CD14-positive monocyte (primary cell): ENCODE measurements at regions of chr17 and their contacts with region 1.

Region 1: GRCh38 chr17:57927048-57927723 is 28.0 kb downstream of the CUEDC1 start:
- DNase-seq: no peak
- H3K4me3 ChIP-seq: no peak overlapping the region
- H3K4me3 Mint-ChIP-seq: no peak overlapping the region
- H3K27ac ChIP-seq: no peak overlapping the region
- H3K27ac Mint-ChIP-seq: peak overlapping the region in 1 of 7 donors; percentile 53
- H3K4me1 ChIP-seq: peaks cover 4 to 7% of the 10 kb centered on the region in 2 donors
- H3K4me1 Mint-ChIP-seq: peaks cover 12% of the 10 kb centered on the region
- H3K27me3 ChIP-seq: no peaks in the 10 kb centered on the region
- H3K27me3 Mint-ChIP-seq: peaks cover 8 to 17% (median 14%) of the 10 kb centered on the region in 3 donors
- CTCF ChIP-seq: no peak

Region 2: GRCh38 chr17:57874434-57875308 is 52.5 kb before region 1 on chr17:
- intact Hi-C with region 1: loop called in 1 of 2 experiments (anchors 5 kb)
- DNase-seq: peak in 2 of 3 donors; percentile 37 to 47
- H3K4me3 ChIP-seq: peak overlapping the region in 2 of 3 experiments; percentile 4 to 59
- H3K4me3 Mint-ChIP-seq: peak overlapping the region; percentile 68 to 73
- H3K27ac ChIP-seq: no peak overlapping the region
- H3K27ac Mint-ChIP-seq: no peak overlapping the region
- H3K4me1 ChIP-seq: peaks cover 35 to 47% of the 10 kb centered on the region in 2 donors
- H3K4me1 Mint-ChIP-seq: peaks cover 55% of the 10 kb centered on the region
- H3K27me3 ChIP-seq: no peaks in the 10 kb centered on the region
- H3K27me3 Mint-ChIP-seq: peaks cover 11 to 14% (median 11%) of the 10 kb centered on the region in 3 donors
- CTCF ChIP-seq: no peak